ENCODE measurements at regions of chr4 and their contacts with region 1.

Region 1: DNA sequence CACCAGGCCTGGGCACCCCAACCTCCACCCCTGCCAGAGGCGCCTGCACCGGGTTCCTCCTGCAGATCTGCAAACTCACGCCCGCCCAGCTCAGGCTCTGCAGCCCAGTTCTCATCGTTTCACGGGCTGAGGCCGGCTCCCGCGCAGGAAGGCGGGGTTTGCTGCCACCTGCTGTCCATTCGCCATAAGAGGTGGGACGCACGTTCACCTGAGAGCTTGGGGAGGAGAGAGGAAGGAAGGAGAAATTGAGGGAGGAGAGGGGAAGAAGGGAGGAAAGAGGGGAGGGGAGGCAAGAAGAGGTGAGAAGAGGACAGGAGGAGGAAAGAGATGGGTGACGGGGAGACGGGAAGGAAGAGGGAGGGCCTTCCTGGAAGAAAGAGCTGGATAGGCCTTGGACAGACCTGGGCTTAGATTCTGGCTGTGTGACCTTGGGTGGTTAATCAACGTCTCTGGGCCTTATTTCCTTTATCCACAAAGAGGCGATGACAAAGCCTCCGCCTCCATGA is 114.5 kb downstream of the ADRA2C start:
- DNase-seq: peak; percentile 60 to 95
- H3K4me3 ChIP-seq: peak overlapping the region in 3 of 4 experiments; percentile 20 to 53 (median 32); a peak in 2 of 8 replicates
- H3K27ac ChIP-seq: no peak overlapping the region
- H3K4me1 ChIP-seq: peaks cover 0 to 10% (median 6%) of the 10 kb centered on the region in 4 experiments; a peak in 6 of 7 replicates
- H3K27me3 ChIP-seq: peaks cover 0 to 11% (median 9%) of the 10 kb centered on the region in 4 experiments; a peak in 6 of 7 replicates
- CTCF ChIP-seq: peak in 2 of 3 experiments; percentile 78 to 86; a peak in 3 of 4 replicates
- EP300 ChIP-seq: no peak
- POLR2A ChIP-seq: no peak
- RAD21 ChIP-seq: peak; percentile 92 to 94

Region 2: DNA sequence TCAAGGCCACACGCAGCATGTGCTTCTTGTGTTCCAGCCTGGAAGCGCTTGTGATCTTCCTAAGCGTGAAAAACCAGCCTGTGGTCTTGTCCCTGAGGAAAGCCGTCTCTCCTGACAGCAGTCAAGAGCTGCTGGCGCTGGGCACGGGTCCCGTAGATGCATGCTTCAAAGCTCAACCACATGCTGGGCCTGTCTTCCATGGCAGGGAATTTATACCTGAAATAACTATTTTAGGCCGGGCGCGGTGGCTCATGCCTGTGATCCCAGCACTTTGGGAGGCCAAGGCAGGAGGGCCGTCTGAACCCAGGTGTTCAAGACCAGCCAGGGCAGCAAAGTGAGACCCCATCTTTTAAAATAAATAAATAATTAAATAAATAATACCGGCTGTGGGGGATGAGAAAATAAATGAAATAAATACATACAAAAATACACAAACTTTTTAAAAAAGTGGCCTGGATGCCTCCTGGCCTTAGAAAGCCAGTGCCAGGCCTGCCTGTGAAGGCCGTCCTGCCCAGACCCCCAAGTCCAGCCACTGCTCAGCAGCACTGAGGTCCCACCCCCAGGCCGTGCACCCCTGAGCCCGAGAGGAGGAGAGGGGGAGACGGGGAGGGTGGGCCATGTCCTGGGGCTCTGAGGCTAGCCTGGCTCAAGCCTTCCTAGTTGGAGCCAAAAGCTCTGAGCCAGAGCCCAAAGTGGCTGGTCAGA is 358.9 kb before region 1 on chr4:
- CTCF ChIA-PET with region 1: no interaction called
- POLR2A ChIA-PET with region 1: no interaction called
- DNase-seq: no peak
- H3K4me3 ChIP-seq: no peak overlapping the region
- H3K27ac ChIP-seq: no peak overlapping the region
- H3K4me1 ChIP-seq: no peaks in the 10 kb centered on the region
- H3K27me3 ChIP-seq: no peaks in the 10 kb centered on the region
- CTCF ChIP-seq: no peak
- EP300 ChIP-seq: no peak
- POLR2A ChIP-seq: no peak
- RAD21 ChIP-seq: no peak

Region 3: GRCh38 chr4:3689600-3690550 is 190.8 kb before region 1 on chr4:
- CTCF ChIA-PET with region 1: no interaction called
- POLR2A ChIA-PET with region 1: no interaction called
- DNase-seq: no peak
- H3K4me3 ChIP-seq: no peak overlapping the region
- H3K27ac ChIP-seq: no peak overlapping the region
- H3K4me1 ChIP-seq: 0 out of 7 replicates have a peak, but pooled peaks cover 0 to 2% (median 0%) of the 10 kb centered on the region in 4 experiments
- H3K27me3 ChIP-seq: no peaks in the 10 kb centered on the region; a peak in 1 of 7 replicates
- CTCF ChIP-seq: no peak
- EP300 ChIP-seq: no peak
- POLR2A ChIP-seq: no peak
- RAD21 ChIP-seq: no peak

Region 4: GRCh38 chr4:3765271-3766040 is 115.2 kb before region 1 on chr4:
- CTCF ChIA-PET with region 1: interaction called, 41 read pairs
- POLR2A ChIA-PET with region 1: interaction called, 5 read pairs
- DNase-seq: peak in 1 of 2 experiments; percentile 83
- H3K4me3 ChIP-seq: peak overlapping the region; percentile 38 to 59 (median 46)
- H3K27ac ChIP-seq: no peak overlapping the region
- H3K4me1 ChIP-seq: peaks cover 0 to 13% (median 4%) of the 10 kb centered on the region in 4 experiments; a peak in 5 of 7 replicates
- H3K27me3 ChIP-seq: peaks cover 4 to 38% (median 28%) of the 10 kb centered on the region in 4 experiments
- CTCF ChIP-seq: peak in 2 of 3 experiments; percentile 43 to 50; a peak in 3 of 4 replicates
- EP300 ChIP-seq: no peak
- POLR2A ChIP-seq: no peak
- RAD21 ChIP-seq: no peak; a peak in 2 of 4 replicates

Region 5: DNA sequence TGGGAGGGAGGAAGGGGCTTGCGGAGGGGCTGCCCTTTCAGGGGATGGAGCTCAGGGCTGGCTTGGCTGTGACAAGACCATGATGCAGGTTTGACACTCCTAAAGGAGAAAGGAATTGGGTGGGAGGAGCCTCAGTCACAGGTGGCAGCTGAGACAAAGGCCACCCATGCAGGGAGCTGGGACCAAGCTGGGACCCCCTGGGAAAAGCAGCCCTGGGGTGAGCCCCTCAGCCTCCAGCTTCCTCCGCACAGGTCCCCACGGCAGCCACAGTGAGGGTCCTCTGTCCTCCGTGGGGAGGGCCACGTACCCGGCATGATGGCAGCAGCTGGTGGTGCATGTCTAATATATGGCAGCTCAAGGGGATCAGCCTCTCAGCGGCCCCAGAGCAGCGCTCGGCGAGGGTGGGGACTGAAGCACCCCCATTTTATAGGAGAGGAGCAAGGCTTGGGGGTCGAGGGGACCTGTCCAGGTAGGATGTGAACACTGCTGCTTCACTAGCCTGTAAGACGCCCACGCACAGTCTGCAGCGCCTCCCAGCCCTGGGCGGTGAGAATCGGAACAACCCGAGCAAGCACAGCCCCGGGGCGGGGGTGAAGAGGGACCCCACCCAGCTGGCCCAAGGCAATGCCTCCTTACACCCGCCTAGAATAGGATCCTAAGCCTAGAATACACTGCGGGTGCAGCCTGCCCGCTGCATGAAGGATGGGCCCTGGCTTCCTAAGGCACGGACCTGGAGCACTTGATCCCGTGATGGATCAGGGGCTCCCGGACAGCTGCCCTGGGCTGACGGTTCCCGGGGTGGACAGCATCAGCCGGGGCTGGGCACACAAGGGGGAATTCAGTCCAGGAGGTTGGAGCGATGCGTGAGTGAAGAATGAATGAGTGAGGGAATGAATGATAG is 97.0 kb before region 1 on chr4:
- CTCF ChIA-PET with region 1: interaction called, 37 read pairs
- POLR2A ChIA-PET with region 1: interaction called, 4 read pairs
- DNase-seq: peak in 1 of 2 experiments; percentile 86
- H3K4me3 ChIP-seq: no peak overlapping the region
- H3K27ac ChIP-seq: no peak overlapping the region
- H3K4me1 ChIP-seq: peaks cover 0 to 9% (median 8%) of the 10 kb centered on the region in 4 experiments; a peak in 5 of 7 replicates
- H3K27me3 ChIP-seq: no peaks in the 10 kb centered on the region
- CTCF ChIP-seq: peak in 2 of 3 experiments; percentile 79 to 81; a peak in 3 of 4 replicates
- EP300 ChIP-seq: no peak
- POLR2A ChIP-seq: no peak
- RAD21 ChIP-seq: peak; percentile 81 to 85

Region 6: DNA sequence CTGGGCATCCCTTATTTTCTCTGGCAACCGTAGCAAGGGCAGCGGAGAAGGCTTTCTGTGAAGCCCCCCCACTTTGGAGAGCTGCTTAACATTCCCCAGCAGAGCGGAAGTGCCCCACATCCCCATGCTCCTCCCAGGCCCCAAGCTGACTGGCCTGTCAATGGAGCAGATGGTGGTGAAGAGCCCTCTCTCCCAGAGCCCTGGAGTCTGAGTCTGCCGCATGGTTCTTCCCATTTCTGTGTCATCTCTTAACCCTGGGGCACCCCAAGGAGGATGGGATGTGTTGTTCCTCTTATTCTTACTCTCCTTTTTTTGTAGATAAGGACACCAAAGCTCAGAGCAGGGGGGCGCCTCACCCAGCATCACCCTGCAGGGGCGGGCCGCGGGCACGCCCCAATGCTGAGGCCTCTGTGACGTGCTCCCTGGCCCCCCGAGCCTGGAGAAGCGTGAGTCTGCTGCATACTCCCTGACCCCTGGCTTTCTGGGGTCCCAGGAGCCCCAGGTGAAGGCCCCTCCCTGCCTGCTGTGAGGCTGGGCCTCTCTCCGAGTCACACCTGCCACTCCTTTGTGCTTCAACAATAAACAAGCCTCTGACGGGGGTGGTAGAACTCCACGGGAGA is 78.6 kb before region 1 on chr4:
- CTCF ChIA-PET with region 1: interaction called, 10 read pairs
- POLR2A ChIA-PET with region 1: no interaction called
- DNase-seq: no peak
- H3K4me3 ChIP-seq: no peak overlapping the region
- H3K27ac ChIP-seq: no peak overlapping the region
- H3K4me1 ChIP-seq: peaks cover 4 to 17% (median 8%) of the 10 kb centered on the region in 4 experiments; a peak in 6 of 7 replicates
- H3K27me3 ChIP-seq: peaks cover 0 to 3% (median 0%) of the 10 kb centered on the region in 4 experiments; a peak in 1 of 7 replicates
- CTCF ChIP-seq: no peak
- EP300 ChIP-seq: no peak
- POLR2A ChIP-seq: no peak
- RAD21 ChIP-seq: no peak

Region 7: DNA sequence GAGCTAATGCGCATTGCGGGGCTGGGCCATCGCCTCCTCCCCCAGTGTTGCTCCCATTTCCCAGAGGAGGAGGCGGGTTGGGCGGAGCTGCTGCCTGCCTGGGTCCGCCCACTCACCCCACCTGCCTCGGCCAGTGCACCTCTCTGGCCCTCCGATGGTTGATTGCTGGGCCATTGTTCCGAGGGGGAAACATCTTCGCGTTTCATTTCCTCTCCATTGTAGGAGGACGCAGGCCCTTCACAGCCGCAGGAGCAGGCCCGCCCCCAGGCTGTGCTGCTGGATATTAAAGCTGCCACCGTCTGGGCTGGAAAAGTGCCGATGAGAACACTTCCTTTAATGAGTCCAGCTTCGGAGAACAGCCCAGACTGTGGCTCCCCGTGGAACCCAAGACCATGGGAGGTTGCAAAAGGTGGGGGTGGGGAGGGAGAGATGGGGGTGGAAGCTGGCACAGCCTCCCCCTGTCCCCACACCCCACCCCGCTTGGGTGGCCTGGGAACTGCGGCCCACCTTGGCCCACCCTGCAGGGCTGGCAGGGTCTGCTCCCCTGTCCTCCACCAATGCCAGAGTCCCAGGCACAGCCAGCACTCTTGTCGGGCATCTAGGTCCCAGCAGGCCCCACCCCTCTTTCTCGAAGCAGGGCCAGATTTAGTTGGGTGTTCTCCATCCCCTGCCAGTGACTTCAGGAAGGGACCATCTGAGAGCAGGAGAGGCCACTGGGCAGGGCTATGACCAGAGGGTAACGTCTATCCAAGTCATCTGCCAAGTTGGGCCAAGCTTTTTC is 17.8 kb before region 1 on chr4:
- CTCF ChIA-PET with region 1: interaction called, 38 read pairs
- POLR2A ChIA-PET with region 1: interaction called, 9 read pairs
- DNase-seq: peak; percentile 70 to 87
- H3K4me3 ChIP-seq: peak overlapping the region; percentile 4 to 51 (median 24); a peak in 5 of 8 replicates
- H3K27ac ChIP-seq: peak overlapping the region; percentile 62
- H3K4me1 ChIP-seq: peaks cover 3 to 23% (median 15%) of the 10 kb centered on the region in 4 experiments
- H3K27me3 ChIP-seq: no peaks in the 10 kb centered on the region
- CTCF ChIP-seq: no peak
- EP300 ChIP-seq: no peak
- POLR2A ChIP-seq: peak in 1 of 2 experiments; percentile 44; a peak in 1 of 3 replicates
- RAD21 ChIP-seq: no peak; a peak in 1 of 4 replicates

Region 8: DNA sequence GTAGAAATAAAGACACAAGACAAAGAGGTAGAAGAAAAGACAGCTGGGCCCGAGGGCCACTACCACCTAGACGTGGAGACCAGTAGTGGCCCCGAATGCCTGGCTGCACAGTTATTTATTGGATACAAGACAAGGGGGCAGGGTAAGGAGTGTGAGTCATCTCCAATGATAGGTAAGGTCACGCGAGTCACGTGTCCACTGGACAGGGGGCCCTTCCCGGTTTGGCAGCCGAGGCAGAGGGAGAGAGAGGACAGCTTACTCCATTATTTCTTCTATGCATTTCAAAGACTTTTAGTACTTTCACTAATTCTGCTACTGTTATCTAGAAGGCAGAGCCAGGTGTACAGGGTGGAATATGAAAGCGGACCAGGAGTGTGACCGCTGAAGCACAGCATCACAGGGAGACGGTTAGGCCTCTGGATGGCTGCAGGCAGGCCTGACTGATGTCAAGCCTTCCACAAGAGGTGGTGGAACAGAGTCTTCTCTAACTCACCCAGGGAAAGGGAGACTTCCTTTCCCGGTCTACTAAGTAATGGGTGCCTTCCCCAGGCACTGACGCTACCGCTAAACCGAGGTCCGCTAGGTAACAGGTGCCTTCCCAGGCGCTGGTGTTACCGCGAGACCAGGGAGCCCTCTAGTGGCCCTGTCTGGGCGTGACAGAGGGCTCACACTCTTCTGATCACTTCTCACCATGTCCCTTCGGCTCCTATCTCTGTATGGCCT is 454.3 kb after region 1 on chr4:
- CTCF ChIA-PET with region 1: no interaction called
- POLR2A ChIA-PET with region 1: no interaction called
- DNase-seq: peak; percentile 31 to 79
- H3K4me3 ChIP-seq: no peak overlapping the region
- H3K27ac ChIP-seq: no peak overlapping the region
- H3K4me1 ChIP-seq: no peaks in the 10 kb centered on the region
- H3K27me3 ChIP-seq: no peaks in the 10 kb centered on the region
- CTCF ChIP-seq: peak; percentile 75 to 82 (median 78)
- EP300 ChIP-seq: no peak
- POLR2A ChIP-seq: no peak
- RAD21 ChIP-seq: peak; percentile 83 to 88

Region 9: DNA sequence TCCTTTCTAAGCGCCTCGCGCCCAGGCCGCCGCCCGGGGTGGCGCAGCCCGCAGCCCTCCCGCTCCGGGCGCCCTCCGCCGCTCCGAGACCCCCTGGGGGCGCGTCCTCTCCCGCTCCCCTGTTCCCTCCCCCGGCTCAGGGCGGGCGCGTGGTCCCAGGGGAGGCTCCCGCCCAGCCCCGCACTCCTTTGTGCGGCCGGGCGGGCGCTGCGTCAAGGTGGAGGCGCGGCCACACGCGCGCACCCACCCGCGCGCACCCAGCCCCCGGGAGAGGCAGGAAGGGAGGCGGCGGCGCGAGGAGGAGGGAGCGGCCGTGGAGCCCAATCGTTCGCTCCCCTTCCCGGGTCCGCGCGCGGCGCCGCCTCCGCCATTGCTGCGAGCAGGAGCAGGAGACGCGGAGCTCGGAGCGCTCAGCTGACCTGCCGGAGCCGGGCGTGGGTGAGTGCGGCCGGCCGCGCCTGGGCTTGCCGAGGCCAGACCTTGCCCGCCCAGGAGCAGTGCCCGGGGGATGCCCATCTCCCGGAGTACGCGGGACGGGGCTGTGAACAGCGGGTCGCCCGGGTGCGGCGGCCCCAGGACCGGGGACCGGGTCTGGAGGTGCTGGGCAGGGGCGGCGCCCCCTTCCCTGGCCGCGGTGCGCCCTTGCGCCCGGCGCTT is 506.2 kb after region 1 on chr4 and contains the start of gene NSG1:
- CTCF ChIA-PET with region 1: no interaction called
- POLR2A ChIA-PET with region 1: no interaction called
- DNase-seq: peak in 1 of 2 experiments; percentile 71
- H3K4me3 ChIP-seq: peak within 1 kb of the TSS; percentile 67 to 92 (median 67)
- H3K27ac ChIP-seq: no peak within 1 kb of the TSS
- H3K4me1 ChIP-seq: peaks cover 0 to 12% (median under 1%) of the 10 kb centered on the region in 4 experiments; a peak in 4 of 7 replicates
- H3K27me3 ChIP-seq: peaks cover 8 to 35% (median 26%) of the 10 kb centered on the region in 4 experiments; a peak in 6 of 7 replicates
- CTCF ChIP-seq: no peak
- EP300 ChIP-seq: no peak
- POLR2A ChIP-seq: no peak; a peak in 1 of 3 replicates
- RAD21 ChIP-seq: no peak
- total RNA-seq, gene NSG1: 56.6 and 61.4 TPM in 2 replicates

Measured in H1 (cell line).